Activated T-helper 1 cell treated with anti-CD3 and anti-CD28 coated beads, Interleukin-12 subunit alpha, Interleukin-12 subunit beta, Interleukin-2, Interleukin-4 antibody, amounts not matched to agents 30 ng/mL and 10 ng/mL and 1 ng/mL, durations not matched to agents 14 hours and 24 hours and 36 hours (primary cell): ENCODE measurements at regions of chr11 and their contacts with region 1.

Region 1: GRCh38 chr11:118928108-118928870 is 2.6 kb upstream of the BCL9L start:
- DNase-seq: peak; percentile 85
- H3K4me3 Mint-ChIP-seq: peak overlapping the region; percentile 93
- H3K27ac Mint-ChIP-seq: peak overlapping the region; percentile 95
- H3K4me1 Mint-ChIP-seq: peaks cover 53% of the 10 kb centered on the region
- H3K27me3 Mint-ChIP-seq: peaks cover 3% of the 10 kb centered on the region

Region 2: GRCh38 chr11:117232092-117232878 is 1696.0 kb before region 1 on chr11 and contains the start of gene RNF214:
- intact Hi-C with region 1: loop called (anchors 5 kb)
- DNase-seq: peak; percentile 73
- H3K4me3 Mint-ChIP-seq: peak within 1 kb of the TSS; percentile 99
- H3K27ac Mint-ChIP-seq: peak within 1 kb of the TSS; percentile 100
- H3K4me1 Mint-ChIP-seq: peaks cover 44% of the 10 kb centered on the region
- H3K27me3 Mint-ChIP-seq: no peaks in the 10 kb centered on the region
- total RNA-seq, gene RNF214: 18.5 and 26.3 TPM in 2 replicates

Region 3: DNA sequence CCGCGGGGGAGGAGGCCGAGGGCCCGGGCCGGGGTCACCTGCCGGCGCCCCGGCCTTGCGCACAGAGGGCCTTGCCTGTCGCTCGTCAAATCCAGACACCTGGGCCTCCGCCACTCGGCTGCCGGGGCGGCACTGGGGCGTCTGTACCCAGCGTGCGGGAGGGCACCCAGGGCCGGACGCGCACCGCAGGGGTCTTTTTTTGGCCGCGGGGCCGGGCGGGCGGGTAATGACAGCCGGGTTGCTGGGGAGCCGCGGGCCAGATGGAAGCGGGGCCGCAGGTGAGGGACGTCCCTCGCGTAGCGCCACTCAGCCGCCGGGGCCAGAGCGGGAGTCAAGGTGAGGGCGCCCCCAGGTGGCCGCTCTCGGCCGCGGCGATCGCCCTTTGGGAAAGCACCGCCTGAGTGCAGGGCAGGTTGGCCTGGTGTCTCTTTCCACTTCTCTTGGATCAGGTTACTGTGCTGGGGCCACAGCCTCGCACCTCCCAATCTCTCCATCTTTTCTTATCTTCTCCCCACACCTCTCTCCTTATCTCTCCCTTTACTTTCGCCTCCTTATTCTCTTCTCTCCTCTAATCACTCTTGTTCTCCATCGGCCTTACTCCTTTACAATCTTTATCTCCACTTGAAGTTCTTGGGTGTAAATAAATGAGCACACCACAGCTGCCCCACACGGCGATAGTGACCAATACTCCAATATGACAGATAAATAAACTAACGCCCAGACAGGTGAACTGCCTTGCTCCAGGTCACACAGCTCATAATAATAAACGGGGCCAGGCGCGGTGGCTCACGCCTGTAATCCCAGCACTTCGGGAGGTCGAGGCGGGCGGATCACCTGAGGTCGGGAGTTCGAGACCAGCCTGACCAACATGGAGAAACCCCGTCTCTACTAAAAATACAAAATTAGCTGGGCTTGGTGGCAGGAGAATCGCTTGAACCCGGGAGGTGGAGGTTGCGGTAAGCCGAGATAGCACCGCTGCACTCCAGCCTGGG is 317.2 kb before region 1 on chr11:
- intact Hi-C with region 1: loop called (anchors 5 kb)
- DNase-seq: peak; percentile 73
- H3K4me3 Mint-ChIP-seq: peak overlapping the region; percentile 50
- H3K27ac Mint-ChIP-seq: no peak overlapping the region
- H3K4me1 Mint-ChIP-seq: peaks cover 23% of the 10 kb centered on the region
- H3K27me3 Mint-ChIP-seq: peaks cover 23% of the 10 kb centered on the region

Region 4: GRCh38 chr11:118907051-118908042 is 20.9 kb before region 1 on chr11:
- intact Hi-C with region 1: loop called (anchors 1 kb)
- DNase-seq: peak; percentile 80
- H3K4me3 Mint-ChIP-seq: no peak overlapping the region
- H3K27ac Mint-ChIP-seq: peak overlapping the region; percentile 40
- H3K4me1 Mint-ChIP-seq: peaks cover 19% of the 10 kb centered on the region
- H3K27me3 Mint-ChIP-seq: no peaks in the 10 kb centered on the region

Region 5: GRCh38 chr11:118956094-118956846 is 28.0 kb after region 1 on chr11 and contains the start of gene UPK2:
- intact Hi-C with region 1: loop called (anchors 1 kb)
- DNase-seq: peak; percentile 77
- H3K4me3 Mint-ChIP-seq: no peak within 1 kb of the TSS
- H3K27ac Mint-ChIP-seq: peak within 1 kb of the TSS; percentile 36
- H3K4me1 Mint-ChIP-seq: peaks cover 7% of the 10 kb centered on the region
- H3K27me3 Mint-ChIP-seq: peaks cover 20% of the 10 kb centered on the region
- total RNA-seq, gene UPK2: not detected in 2 replicates

Region 6: DNA sequence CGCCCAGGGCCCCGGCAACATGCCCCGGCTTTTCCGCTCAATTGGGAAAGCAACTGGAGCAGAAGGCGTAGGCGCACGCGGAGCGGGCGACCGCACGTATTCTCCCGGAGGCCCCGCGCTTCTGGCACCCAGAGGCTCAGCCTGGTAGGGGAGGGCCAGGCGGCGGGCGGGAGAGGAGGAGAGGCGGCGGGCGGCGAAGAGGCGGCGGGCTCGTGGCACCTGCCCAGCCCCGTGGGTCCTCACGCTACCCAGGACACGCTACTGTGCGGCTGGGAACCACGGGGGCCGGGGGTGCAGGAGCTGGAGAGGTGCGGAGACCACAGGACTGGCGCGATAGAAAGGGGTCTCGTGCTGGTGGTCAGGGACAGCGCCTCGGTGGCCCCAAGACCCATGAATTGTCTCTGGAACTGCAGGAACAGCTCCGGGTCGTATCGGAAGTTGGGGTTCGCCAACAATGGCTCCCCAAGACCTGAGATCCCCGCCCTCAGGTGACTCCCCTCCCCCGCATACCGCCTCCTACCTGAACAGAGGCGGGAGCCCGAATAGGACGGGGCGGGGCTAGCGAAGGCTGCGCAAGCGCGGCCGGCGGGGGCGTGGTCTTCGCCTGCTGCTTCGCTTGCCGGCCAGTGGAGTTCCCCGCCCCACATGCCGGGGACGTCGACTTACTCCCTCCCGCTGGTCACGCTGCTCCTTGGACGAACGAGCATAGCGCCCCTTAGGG is 102.2 kb after region 1 on chr11 and contains the start of gene SLC37A4:
- intact Hi-C with region 1: loop called (anchors 2 kb)
- DNase-seq: peak; percentile 99
- H3K4me3 Mint-ChIP-seq: peak within 1 kb of the TSS; percentile 80
- H3K27ac Mint-ChIP-seq: peak within 1 kb of the TSS; percentile 86
- H3K4me1 Mint-ChIP-seq: peaks cover 15% of the 10 kb centered on the region
- H3K27me3 Mint-ChIP-seq: no peaks in the 10 kb centered on the region
- total RNA-seq, gene SLC37A4: 24.3 and 28.7 TPM in 2 replicates